Activated naive CD4-positive, alpha-beta T cell treated with anti-CD3 and anti-CD28 coated beads for 36 hours (primary cell): ENCODE measurements at regions of chr7 and their contacts with region 1.

Region 1: GRCh38 chr7:150988230-150989226 is 2.3 kb upstream of the NOS3 start:
- DNase-seq: peak; percentile 77
- H3K4me3 Mint-ChIP-seq: no peak overlapping the region
- H3K27ac Mint-ChIP-seq: no peak overlapping the region
- H3K4me1 Mint-ChIP-seq: peaks cover 25% of the 10 kb centered on the region
- H3K27me3 Mint-ChIP-seq: no peaks in the 10 kb centered on the region

Region 2: DNA sequence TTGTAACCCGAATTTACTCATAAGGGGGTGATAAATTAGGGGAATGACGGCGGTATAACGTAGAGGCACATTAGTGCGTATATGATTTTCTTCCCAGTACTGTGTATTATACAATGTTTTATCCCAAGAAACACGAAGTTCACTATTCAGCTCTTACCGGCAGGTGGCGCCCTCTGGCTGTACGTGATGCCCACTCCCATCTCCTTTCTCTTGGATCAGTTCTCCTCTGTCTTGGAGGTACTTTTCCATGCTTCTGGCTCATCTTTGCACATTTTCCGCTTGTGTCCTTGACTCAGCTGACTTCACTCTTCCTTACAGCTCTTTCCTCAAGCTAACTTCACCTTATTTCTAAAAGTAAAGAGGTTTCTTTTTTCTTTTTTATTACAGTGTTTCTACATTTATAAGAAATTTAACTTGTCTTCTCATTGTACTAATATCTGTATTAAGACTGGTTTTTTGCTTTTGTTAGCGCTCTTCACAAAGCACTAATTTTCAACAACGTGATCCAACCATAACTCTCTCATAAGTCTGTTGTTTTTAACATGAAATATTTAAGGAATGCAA is 209.7 kb before region 1 on chr7:
- CTCF ChIA-PET with region 1: interaction called, 5 read pairs
- intact Hi-C with region 1: loop called (anchors 1 kb)
- DNase-seq: peak; percentile 87
- H3K4me3 Mint-ChIP-seq: no peak overlapping the region
- H3K27ac Mint-ChIP-seq: no peak overlapping the region
- H3K4me1 Mint-ChIP-seq: peaks cover 4% of the 10 kb centered on the region
- H3K27me3 Mint-ChIP-seq: peaks cover 3% of the 10 kb centered on the region

Region 3: GRCh38 chr7:150909200-150909995 is 79.1 kb before region 1 on chr7:
- CTCF ChIA-PET with region 1: interaction called, 16 read pairs
- intact Hi-C with region 1: no loop called
- DNase-seq: peak; percentile 73
- H3K4me3 Mint-ChIP-seq: no peak overlapping the region
- H3K27ac Mint-ChIP-seq: no peak overlapping the region
- H3K4me1 Mint-ChIP-seq: peaks cover 8% of the 10 kb centered on the region
- H3K27me3 Mint-ChIP-seq: no peaks in the 10 kb centered on the region

Region 4: DNA sequence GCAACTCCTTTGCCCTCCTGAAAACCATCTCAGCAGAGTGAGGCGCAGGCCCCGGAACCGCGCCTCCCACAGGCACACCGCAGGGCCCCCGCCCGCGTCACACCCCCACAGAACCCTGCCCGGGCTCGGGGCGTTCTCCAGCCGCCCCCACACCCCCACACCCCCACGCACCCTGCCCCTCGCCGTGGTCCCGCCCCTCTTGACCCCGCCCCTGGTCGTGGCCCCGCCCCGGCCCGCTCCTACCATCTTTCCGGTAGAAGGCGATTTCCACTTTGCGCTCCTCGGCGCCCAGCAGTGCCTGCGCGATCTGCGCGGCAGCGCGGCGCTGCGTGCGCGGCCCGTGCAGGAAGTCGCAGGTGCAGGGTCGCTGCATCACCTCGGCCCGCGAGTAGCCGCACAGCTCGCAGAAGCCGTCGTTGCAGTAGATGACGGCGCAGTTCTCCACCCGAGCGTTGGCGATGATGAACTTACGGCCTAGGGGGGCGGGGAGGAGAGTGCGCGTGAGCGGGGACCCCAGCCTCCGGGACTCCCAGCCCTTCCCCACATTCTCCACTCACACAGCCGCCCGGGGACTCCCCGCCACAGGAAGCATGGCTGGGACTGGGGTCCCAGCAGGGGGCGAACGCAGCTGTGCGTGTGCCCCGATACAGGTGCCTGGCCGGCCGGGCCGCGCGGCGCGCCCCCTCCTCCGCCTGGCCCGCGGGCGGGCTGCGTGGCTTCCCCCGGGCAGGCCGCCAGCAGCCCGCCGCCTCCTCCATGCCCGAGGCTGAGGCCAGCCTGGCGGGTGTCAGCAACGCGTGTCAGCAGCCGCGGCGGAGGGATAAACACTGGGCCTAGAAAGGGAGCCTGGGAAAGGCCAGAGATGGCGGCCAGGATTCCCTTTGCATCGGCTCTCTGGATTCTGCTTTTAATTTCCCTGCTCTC is 13.8 kb before region 1 on chr7:
- CTCF ChIA-PET with region 1: interaction called, 29 read pairs
- intact Hi-C with region 1: loop called (anchors 1 kb)
- DNase-seq: peak; percentile 78
- H3K4me3 Mint-ChIP-seq: peak overlapping the region; percentile 79
- H3K27ac Mint-ChIP-seq: peak overlapping the region; percentile 36
- H3K4me1 Mint-ChIP-seq: peaks cover 27% of the 10 kb centered on the region
- H3K27me3 Mint-ChIP-seq: peaks cover 25% of the 10 kb centered on the region

Region 5: GRCh38 chr7:151017953-151018420 is 29.5 kb after region 1 on chr7:
- CTCF ChIA-PET with region 1: interaction called, 17 read pairs
- intact Hi-C with region 1: no loop called
- DNase-seq: peak; percentile 82
- H3K4me3 Mint-ChIP-seq: peak overlapping the region; percentile 72
- H3K27ac Mint-ChIP-seq: no peak overlapping the region
- H3K4me1 Mint-ChIP-seq: peaks cover 50% of the 10 kb centered on the region
- H3K27me3 Mint-ChIP-seq: peaks cover 7% of the 10 kb centered on the region

Region 6: DNA sequence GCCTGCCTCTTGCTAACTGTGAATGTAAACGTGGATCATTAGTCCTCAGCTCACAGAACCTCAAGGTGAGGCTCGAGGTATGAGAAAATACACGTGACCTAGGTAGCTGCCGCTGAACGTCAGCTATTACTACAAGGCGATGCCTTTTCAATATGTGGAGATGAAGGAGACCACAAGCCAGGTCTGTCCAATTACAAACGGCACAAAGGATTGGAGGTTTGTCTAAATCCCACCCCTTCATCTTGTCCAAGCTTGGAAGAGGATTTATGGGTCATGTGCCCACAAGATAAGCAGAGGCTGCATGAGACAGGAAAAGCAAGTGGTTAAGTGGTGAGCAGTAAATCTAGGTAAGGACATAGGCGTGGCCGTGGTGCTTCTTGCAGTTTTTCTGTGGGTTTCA is 218.4 kb after region 1 on chr7:
- CTCF ChIA-PET with region 1: no interaction called
- intact Hi-C with region 1: no loop called
- DNase-seq: no peak
- H3K4me3 Mint-ChIP-seq: no peak overlapping the region
- H3K27ac Mint-ChIP-seq: no peak overlapping the region
- H3K4me1 Mint-ChIP-seq: peaks cover 17% of the 10 kb centered on the region
- H3K27me3 Mint-ChIP-seq: peaks cover 2% of the 10 kb centered on the region